ENCODE measurements at regions of chr7 and their contacts with region 1.

Region 1: GRCh38 chr7:8295638-8296361 is 33.8 kb upstream of the ICA1 start:
- DNase-seq: peak; percentile 46 to 82
- H3K4me3 ChIP-seq: no peak overlapping the region
- H3K27ac ChIP-seq: no peak overlapping the region
- H3K4me1 ChIP-seq: peaks cover 11% of the 10 kb centered on the region
- H3K27me3 ChIP-seq: no peaks in the 10 kb centered on the region
- CTCF ChIP-seq: peak; percentile 93

Region 2: DNA sequence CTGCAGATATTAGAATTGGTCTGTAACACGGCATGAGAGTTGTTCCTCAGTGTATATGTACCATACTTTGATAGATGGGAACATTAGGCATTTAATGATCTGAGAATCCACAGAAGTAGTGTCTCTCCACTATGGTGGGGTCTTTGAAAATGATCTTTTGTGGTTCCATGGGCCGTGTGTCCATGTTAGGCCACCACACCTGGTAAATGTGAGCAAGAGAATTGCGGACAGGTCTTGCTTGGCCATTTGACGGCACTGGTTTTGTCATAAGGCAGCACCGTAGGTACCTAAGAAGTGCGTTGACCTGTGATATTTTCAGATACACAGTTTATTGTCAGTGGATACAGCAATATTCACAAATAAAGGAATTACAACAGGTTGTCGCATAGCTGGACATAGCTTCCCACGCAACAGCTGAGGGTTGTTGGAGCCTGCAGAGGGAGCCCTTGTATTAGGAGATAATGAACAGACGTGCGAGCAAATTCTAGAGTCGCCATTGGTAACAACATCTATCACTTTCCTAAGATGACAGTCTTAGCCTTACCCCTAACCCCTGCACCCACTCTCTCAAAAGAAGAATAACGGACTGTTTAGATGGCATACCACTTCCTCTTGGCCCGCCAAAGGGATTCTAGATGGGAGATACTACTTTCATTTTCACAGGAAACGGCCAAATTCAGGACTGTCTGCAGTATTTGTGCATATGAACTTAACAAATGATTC is 871.5 kb before region 1 on chr7:
- CTCF ChIA-PET with region 1: no interaction called
- POLR2A ChIA-PET with region 1: no interaction called
- intact Hi-C with region 1: loop called (anchors 2 kb)
- DNase-seq: peak; percentile 55 to 60
- H3K4me3 ChIP-seq: peak overlapping the region; percentile 29; the same call in 1 of the 2 replicates
- H3K27ac ChIP-seq: no peak overlapping the region
- H3K4me1 ChIP-seq: no peaks in the 10 kb centered on the region
- H3K27me3 ChIP-seq: no peaks in the 10 kb centered on the region
- CTCF ChIP-seq: peak; percentile 88

Region 3: GRCh38 chr7:7542251-7542835 is 753.5 kb before region 1 on chr7:
- CTCF ChIA-PET with region 1: no interaction called
- POLR2A ChIA-PET with region 1: no interaction called
- intact Hi-C with region 1: loop called (anchors 5 kb)
- DNase-seq: no peak
- H3K4me3 ChIP-seq: no peak overlapping the region
- H3K27ac ChIP-seq: no peak overlapping the region
- H3K4me1 ChIP-seq: peaks cover 15% of the 10 kb centered on the region
- H3K27me3 ChIP-seq: no peaks in the 10 kb centered on the region
- CTCF ChIP-seq: no peak

Region 4: GRCh38 chr7:7681179-7681935 is 614.4 kb before region 1 on chr7:
- CTCF ChIA-PET with region 1: interaction called, 10 read pairs
- POLR2A ChIA-PET with region 1: no interaction called
- intact Hi-C with region 1: loop called (anchors 5 kb)
- DNase-seq: peak; percentile 29 to 82
- H3K4me3 ChIP-seq: peak overlapping the region; percentile 11; the same call in 1 of the 2 replicates
- H3K27ac ChIP-seq: peak overlapping the region; percentile 38
- H3K4me1 ChIP-seq: peaks cover 28% of the 10 kb centered on the region
- H3K27me3 ChIP-seq: no peaks in the 10 kb centered on the region
- CTCF ChIP-seq: peak; percentile 84

Region 5: DNA sequence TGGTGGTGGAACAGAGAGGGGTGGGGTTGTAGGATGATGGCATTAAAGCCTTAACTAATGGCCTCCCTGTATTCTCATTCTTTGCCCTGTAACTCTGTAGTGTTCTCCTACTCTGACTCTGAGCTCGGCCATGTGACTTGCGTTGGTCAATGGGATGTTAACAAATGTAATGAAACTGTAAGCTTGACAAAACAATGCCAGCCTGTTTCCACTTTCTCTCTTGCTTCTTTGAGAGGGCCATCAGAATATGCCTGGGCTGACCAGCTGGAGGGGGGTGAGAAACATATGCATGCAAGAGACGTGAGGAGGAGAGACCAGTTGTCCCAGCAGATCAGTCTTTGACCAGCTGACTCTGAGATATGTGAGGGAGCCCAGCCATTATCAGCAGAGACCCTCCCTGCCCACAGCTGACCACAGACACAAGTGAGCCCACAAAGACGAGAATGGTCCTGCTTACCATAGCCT is 134.4 kb before region 1 on chr7:
- CTCF ChIA-PET with region 1: interaction called, 11 read pairs
- POLR2A ChIA-PET with region 1: no interaction called
- intact Hi-C with region 1: no loop called
- DNase-seq: no peak
- H3K4me3 ChIP-seq: no peak overlapping the region
- H3K27ac ChIP-seq: no peak overlapping the region
- H3K4me1 ChIP-seq: no peaks in the 10 kb centered on the region
- H3K27me3 ChIP-seq: no peaks in the 10 kb centered on the region
- CTCF ChIP-seq: no peak

Region 6: GRCh38 chr7:8217200-8218068 is 78.4 kb before region 1 on chr7:
- CTCF ChIA-PET with region 1: no interaction called
- POLR2A ChIA-PET with region 1: no interaction called
- intact Hi-C with region 1: loop called (anchors 1 kb)
- DNase-seq: peak; percentile 8 to 59
- H3K4me3 ChIP-seq: no peak overlapping the region
- H3K27ac ChIP-seq: no peak overlapping the region
- H3K4me1 ChIP-seq: peaks cover 7% of the 10 kb centered on the region; the same call in 1 of the 2 replicates
- H3K27me3 ChIP-seq: no peaks in the 10 kb centered on the region
- CTCF ChIP-seq: peak; percentile 94

Region 7: DNA sequence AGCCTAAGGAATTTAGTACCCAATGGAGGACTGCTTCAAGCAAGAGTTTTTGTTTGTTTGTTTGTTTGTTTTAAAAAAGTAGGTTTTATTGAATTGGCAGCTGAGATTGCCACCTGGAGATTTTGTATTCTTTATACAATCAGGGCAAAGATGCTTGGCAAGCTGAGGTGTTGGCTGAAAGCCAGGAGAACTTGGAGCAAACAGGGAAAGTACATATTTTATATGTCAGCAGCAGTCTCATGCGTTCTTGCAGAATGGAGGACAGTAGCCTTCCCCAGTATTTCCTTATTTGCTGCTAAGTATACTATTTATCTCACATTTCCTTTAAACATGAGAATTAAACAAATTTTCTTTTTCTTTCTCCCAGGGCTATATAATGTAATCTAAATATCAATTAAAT is 11.2 kb before region 1 on chr7:
- CTCF ChIA-PET with region 1: no interaction called
- POLR2A ChIA-PET with region 1: no interaction called
- intact Hi-C with region 1: no loop called
- DNase-seq: no peak
- H3K4me3 ChIP-seq: no peak overlapping the region
- H3K27ac ChIP-seq: no peak overlapping the region
- H3K4me1 ChIP-seq: no peaks in the 10 kb centered on the region
- H3K27me3 ChIP-seq: no peaks in the 10 kb centered on the region
- CTCF ChIP-seq: no peak